OCI-LY7 (cell line): ENCODE measurements at regions of chr17 and their contacts with region 1.

Region 1: DNA sequence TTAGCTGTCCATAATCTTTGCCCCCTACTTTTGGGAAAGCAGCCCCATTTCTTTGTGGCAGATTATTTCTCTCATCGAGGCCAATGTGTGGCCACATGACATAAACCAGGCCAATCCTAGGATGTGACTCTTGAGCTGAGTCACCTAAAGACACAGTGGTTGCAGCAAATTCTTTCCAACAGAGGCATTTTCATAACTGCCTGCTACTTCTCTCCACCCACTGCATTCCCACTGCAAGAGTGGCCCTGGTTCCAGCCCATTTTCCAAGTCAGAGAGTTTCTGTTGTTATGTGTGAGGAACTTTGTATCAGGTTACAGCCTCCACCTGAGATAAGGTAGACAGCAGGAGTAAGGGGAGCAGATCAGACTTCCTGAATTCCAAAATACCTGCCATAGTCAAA is 195.2 kb downstream of the RGS9 start:
- DNase-seq: no peak
- H3K4me3 ChIP-seq: no peak overlapping the region
- H3K27ac ChIP-seq: no peak overlapping the region
- H3K4me1 ChIP-seq: no peaks in the 10 kb centered on the region
- CTCF ChIP-seq: no peak

Region 2: GRCh38 chr17:65345261-65346005 is 13.1 kb after region 1 on chr17:
- CTCF ChIA-PET with region 1: no interaction called
- POLR2A ChIA-PET with region 1: no interaction called
- intact Hi-C with region 1: no loop called
- DNase-seq: no peak
- H3K4me3 ChIP-seq: no peak overlapping the region
- H3K27ac ChIP-seq: no peak overlapping the region
- H3K4me1 ChIP-seq: no peaks in the 10 kb centered on the region
- CTCF ChIP-seq: no peak

Region 3: GRCh38 chr17:65389953-65390352 is 57.6 kb after region 1 on chr17:
- CTCF ChIA-PET with region 1: no interaction called
- POLR2A ChIA-PET with region 1: no interaction called
- intact Hi-C with region 1: loop called (anchors 10 kb)
- DNase-seq: no peak
- H3K4me3 ChIP-seq: no peak overlapping the region
- H3K27ac ChIP-seq: no peak overlapping the region
- H3K4me1 ChIP-seq: no peaks in the 10 kb centered on the region
- CTCF ChIP-seq: no peak

Region 4: GRCh38 chr17:65609749-65610148 is 277.4 kb after region 1 on chr17:
- CTCF ChIA-PET with region 1: no interaction called
- POLR2A ChIA-PET with region 1: no interaction called
- intact Hi-C with region 1: no loop called
- DNase-seq: no peak
- H3K4me3 ChIP-seq: no peak overlapping the region
- H3K27ac ChIP-seq: no peak overlapping the region
- H3K4me1 ChIP-seq: no peaks in the 10 kb centered on the region
- CTCF ChIP-seq: no peak